ENCODE measurements at regions of chr5 and their contacts with region 1.

Region 1: DNA sequence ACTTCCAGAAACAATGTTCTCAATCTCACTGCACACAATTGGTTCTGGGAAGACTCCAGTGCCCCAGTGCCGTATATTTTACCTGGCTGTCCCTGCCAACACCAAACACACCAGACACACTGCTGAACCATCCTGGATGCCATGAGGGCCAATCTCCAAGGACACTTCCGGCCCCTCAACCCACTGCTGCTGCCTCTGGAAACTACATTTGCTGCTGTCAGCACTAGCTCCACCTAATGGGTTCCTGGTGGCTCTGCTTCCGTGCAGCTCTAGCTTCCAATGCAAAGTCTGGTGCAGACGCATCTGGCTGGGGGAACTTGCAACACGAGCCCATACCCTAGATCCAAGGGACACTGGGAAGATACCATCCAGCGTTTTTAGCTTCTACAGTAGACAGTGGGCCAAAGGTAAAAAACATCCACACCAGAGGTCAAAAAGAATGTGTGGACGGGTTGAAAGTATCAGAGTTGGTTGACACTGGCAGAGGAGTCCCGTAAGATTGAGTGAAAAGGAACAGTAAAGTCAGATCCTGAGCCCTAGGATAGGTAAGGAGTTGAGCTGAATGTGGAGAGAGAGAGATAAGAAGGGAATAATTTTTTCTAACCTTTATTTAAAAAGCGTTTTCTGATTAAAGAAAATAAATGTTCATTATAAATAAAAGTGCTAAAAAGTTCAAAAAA is 99.7 kb upstream of the KIF2A start:
- DNase-seq: peak in 3 of 10 donors; percentile 23 to 46 (median 36)
- H3K4me3 ChIP-seq: no peak overlapping the region
- H3K27ac ChIP-seq: no peak overlapping the region
- H3K27me3 ChIP-seq: peaks cover 0 to 8% (median 0%) of the 10 kb centered on the region in 45 donors
- CTCF ChIP-seq: peak in 9 of 56 donors; percentile 10 to 36 (median 24)

Region 2: DNA sequence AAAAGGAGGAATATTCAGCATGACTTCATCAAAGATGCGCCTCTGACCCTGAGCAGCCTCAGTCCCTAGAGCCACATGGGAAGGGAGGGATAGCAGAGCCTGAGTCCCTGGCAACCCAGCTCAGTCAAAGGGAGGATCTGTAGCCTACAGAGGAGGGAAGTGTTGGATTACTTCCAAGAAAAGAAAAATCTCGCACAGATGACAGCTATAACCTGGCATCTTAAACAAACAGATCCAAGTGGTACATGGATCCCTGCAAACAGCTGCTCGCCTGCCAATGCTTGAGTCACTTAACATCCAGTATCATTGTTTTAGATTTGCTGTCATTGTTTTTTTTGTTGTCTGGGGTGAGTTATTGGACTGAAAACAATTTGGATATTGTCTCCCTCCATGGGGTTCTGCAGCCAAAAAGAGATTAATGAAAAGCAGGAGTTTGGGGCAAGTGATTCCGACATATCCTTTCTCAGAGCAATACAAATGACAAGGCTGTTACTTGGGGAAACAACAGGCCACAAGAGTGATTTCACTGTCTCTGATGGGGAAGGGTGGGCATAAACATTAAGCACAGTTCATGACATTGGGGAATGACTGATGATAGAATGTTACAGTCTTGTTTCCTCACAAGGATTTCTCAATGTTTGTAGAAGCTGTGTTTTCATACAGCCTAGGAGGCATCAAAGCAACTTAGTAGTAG is 53.7 kb before region 1 on chr5:
- intact Hi-C with region 1: loop called in 1 of 2 experiments (anchors 10 kb)
- DNase-seq: no peak
- H3K4me3 ChIP-seq: no peak overlapping the region
- H3K27ac ChIP-seq: peak overlapping the region in 44 of 59 donors; percentile 0 to 79 (median 49)
- H3K27me3 ChIP-seq: no peaks in the 10 kb centered on the region
- CTCF ChIP-seq: no peak

Region 3: DNA sequence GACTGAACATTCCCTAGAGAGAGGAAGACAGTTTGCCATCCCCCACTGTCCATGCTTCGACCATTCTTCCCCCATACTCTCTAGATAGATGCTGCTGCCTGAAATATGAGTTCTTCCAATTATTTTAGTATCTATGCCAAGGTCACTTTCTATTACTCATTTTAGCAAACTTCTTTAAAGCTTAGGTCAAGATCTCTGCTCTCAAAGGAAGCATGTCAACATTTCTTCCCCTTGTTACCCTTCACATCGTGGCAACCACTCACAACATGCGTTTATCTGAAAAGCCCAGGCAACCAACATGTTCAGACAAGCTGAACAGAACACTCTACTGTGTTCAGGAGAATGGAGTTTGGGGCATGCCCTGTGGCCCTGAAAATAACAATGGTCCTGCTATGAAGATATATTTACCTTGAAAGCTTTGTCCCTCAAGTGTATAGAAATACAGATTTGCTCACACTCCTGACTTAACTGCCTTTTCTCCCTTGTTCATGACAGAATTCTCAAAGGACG is 38.7 kb before region 1 on chr5:
- intact Hi-C with region 1: no loop called
- DNase-seq: no peak
- H3K4me3 ChIP-seq: no peak overlapping the region
- H3K27ac ChIP-seq: no peak overlapping the region
- H3K27me3 ChIP-seq: peaks cover 0 to 10% (median 0%) of the 10 kb centered on the region in 45 donors
- CTCF ChIP-seq: no peak